Mammary epithelial cell (primary cell): ENCODE measurements at regions of chr13 and their contacts with region 1.

Region 1: GRCh38 chr13:52652196-52652979 is at the start of gene SUGT1:
- DNase-seq: peak; percentile 98
- H3K4me3 ChIP-seq: peak within 1 kb of the TSS; percentile 77 to 94 (median 94)
- H3K27ac ChIP-seq: peak within 1 kb of the TSS; percentile 100
- H3K4me1 ChIP-seq: peaks cover 12% of the 10 kb centered on the region
- H3K27me3 ChIP-seq: no peaks in the 10 kb centered on the region
- CTCF ChIP-seq: peak; percentile 58 to 68
- total RNA-seq, gene SUGT1: 16.8 to 45.9 TPM

Region 2: GRCh38 chr13:52344108-52344507 is 308.3 kb before region 1 on chr13:
- CTCF ChIA-PET with region 1: no interaction called
- dilution Hi-C with region 1: no loop called
- in situ Hi-C with region 1: no loop called
- intact Hi-C with region 1: loop called (anchors 5 kb)
- DNase-seq: no peak
- H3K4me3 ChIP-seq: no peak overlapping the region
- H3K27ac ChIP-seq: no peak overlapping the region
- H3K4me1 ChIP-seq: peaks cover 43% of the 10 kb centered on the region
- H3K27me3 ChIP-seq: no peaks in the 10 kb centered on the region
- CTCF ChIP-seq: no peak

Region 3: DNA sequence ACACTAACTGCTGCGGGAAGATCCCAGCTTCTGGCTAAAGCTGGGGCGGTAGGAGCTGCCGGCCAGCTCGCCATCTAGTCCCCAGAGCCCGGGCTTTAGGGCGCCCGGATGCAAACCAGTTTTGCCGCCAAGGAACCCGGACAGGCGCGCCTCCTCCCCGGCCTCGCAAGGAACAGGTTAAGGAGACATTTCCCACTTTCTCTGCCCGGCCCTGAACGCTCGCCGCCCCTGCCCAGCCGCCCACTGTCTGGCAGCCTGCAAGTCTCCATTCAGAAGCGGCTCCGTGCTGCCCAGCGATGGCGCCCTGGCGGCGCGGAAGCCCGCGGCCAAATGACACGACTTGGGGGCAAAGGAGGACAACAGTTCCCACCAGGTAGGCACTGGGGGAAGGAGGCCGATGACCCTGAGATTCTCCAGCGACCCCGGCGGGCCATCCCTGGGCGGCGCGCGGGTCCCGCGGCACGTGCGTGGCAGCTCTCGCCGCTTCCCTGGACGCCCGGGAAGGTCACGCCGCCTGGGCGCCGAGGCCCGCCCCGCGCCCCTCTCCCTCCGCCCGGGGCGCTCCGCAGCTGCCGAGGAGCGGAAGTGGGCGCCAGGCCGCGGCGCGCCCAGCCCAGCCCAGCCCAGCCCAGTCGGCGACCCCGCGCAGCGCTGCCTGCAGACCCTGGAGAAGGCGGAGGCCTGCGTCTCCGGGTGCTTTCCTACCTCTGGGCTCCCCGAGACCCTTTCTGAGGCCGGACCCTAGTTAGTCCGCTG is 52.4 kb before region 1 on chr13:
- CTCF ChIA-PET with region 1: no interaction called
- dilution Hi-C with region 1: no loop called
- in situ Hi-C with region 1: no loop called
- intact Hi-C with region 1: loop called (anchors 10 kb)
- DNase-seq: peak; percentile 32
- H3K4me3 ChIP-seq: peak overlapping the region; percentile 47 to 67 (median 67)
- H3K27ac ChIP-seq: peak overlapping the region; percentile 50
- H3K4me1 ChIP-seq: peaks cover 21% of the 10 kb centered on the region
- H3K27me3 ChIP-seq: no peaks in the 10 kb centered on the region
- CTCF ChIP-seq: no peak

Region 4: GRCh38 chr13:52617070-52618060 is 35.0 kb before region 1 on chr13:
- CTCF ChIA-PET with region 1: interaction called, 6 read pairs
- dilution Hi-C with region 1: no loop called
- in situ Hi-C with region 1: no loop called
- intact Hi-C with region 1: loop called (anchors 1 kb)
- DNase-seq: peak; percentile 86
- H3K4me3 ChIP-seq: peak overlapping the region; percentile 52 to 93 (median 81)
- H3K27ac ChIP-seq: peak overlapping the region; percentile 58
- H3K4me1 ChIP-seq: peaks cover 4% of the 10 kb centered on the region
- H3K27me3 ChIP-seq: no peaks in the 10 kb centered on the region
- CTCF ChIP-seq: no peak

Region 5: DNA sequence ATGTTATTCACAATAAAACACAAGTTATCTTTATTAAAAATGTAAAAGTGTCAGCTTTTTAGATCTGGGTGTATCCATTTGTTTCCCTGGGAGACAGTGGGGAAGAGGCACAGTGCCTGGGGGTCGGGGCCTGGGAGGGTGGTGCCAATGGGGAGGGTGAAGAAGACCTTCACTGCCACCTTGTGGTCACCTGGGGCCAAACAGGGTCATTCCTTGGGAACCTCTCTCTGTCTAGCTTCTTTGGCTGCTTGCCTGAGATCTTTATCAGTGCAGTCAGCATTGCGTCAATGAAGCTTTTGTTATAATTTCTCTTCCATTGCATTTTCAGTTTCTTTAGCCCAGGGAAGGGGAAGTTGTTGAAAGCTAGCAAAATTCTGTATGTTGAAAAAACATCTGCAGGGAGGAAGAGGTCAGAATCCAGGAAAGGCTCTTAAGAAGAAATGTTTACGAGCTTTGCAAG is 157.0 kb after region 1 on chr13:
- CTCF ChIA-PET with region 1: interaction called, 6 read pairs
- dilution Hi-C with region 1: no loop called
- in situ Hi-C with region 1: no loop called
- intact Hi-C with region 1: loop called (anchors 1 kb)
- DNase-seq: peak; percentile 84
- H3K4me3 ChIP-seq: no peak overlapping the region
- H3K27ac ChIP-seq: no peak overlapping the region
- H3K4me1 ChIP-seq: no peaks in the 10 kb centered on the region
- H3K27me3 ChIP-seq: no peaks in the 10 kb centered on the region
- CTCF ChIP-seq: peak; percentile 69 to 86

Region 6: DNA sequence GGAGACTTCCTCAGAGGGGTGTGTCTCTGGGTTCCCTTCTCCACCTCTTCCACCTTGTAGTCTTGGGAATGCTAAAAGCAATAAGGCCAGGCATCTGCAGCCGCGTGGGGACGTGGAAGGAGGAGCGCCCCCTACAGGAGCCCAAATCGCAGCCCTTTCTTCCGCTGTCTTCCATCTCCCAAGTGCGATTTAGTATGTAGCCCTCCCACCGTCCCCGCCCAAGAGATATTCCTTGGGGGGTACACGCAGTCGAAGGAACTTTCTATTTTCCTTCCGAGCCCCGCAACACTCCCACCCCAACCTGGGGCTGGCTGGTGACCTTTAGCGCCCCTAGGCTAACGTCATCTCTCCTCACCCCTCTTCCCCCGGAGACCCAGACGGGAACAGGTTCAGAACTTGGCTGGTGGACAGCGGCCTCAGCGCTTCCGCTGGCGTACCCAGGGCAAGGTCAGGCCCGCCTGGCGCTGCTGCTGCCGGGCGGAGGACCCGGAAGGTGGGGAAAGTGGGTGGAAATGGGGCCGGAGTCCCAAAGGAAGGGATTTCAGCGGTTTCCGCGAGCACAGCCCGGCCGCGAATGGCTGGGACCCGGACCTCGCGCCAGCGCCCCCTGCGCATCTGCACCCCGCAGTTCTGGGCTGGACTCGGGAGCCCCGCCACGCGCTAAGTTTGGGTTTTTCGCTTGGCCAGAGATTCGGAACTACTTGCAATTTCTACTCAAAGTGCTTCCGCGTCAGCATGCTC is 198.2 kb after region 1 on chr13:
- CTCF ChIA-PET with region 1: no interaction called
- dilution Hi-C with region 1: no loop called
- in situ Hi-C with region 1: no loop called
- intact Hi-C with region 1: loop called (anchors 5 kb)
- DNase-seq: peak; percentile 42
- H3K4me3 ChIP-seq: peak overlapping the region; percentile 46 to 53 (median 51)
- H3K27ac ChIP-seq: no peak overlapping the region
- H3K4me1 ChIP-seq: peaks cover 4% of the 10 kb centered on the region
- H3K27me3 ChIP-seq: peaks cover 55% of the 10 kb centered on the region
- CTCF ChIP-seq: no peak